ENCODE measurements at regions of chr11 and their contacts with region 1.

Region 1: GRCh38 chr11:123640677-123641494 is 13.5 kb downstream of the SCN3B start:
- DNase-seq: peak; percentile 71
- CTCF ChIP-seq: peak; percentile 79

Region 2: DNA sequence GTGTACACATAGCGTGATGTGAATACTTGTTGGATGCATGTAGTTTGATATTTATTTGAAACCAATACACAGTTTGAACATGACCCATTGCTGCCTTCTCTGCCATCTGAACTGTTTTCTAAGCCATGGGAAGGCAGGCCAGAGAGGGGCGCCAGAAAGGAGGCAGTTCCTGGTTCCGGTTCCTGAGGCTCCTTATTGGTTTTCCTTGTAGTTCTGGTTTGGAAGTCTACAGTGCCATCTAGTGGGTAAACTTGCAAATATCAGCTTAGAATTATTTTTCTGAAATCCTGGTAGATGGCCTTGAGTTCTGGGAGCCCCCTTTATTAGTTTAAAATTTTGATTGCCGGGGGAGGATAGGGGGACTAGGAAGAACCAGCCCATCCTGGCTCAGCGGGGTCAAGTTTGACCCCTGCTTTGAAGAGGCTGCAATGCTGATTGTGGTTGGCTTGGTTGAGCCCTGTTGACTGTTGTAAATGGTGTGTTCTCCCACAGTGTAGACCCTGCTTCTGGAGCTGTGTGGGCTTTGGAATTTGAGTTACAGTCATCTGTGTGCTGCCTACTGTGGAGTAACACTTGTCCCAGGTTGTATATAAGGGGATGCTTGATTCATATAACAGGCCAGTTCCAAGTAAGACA is 162.4 kb before region 1 on chr11:
- CTCF ChIA-PET with region 1: no interaction called
- POLR2A ChIA-PET with region 1: no interaction called
- DNase-seq: peak; percentile 53
- CTCF ChIP-seq: peak; percentile 42

Region 3: GRCh38 chr11:123628936-123629683 is 11.8 kb before region 1 on chr11:
- CTCF ChIA-PET with region 1: interaction called, 16 read pairs
- POLR2A ChIA-PET with region 1: no interaction called
- DNase-seq: no peak
- CTCF ChIP-seq: no peak

Region 4: GRCh38 chr11:123654566-123655081 is 13.7 kb after region 1 on chr11 and contains the start of gene SCN3B:
- CTCF ChIA-PET with region 1: interaction called, 12 read pairs
- POLR2A ChIA-PET with region 1: interaction called, 3 read pairs
- DNase-seq: peak; percentile 44
- CTCF ChIP-seq: no peak

Measured in GM10248 (cell line).